MCF 10A (cell line): ENCODE measurements at regions of chr10 and their contacts with region 1.

Region 1: DNA sequence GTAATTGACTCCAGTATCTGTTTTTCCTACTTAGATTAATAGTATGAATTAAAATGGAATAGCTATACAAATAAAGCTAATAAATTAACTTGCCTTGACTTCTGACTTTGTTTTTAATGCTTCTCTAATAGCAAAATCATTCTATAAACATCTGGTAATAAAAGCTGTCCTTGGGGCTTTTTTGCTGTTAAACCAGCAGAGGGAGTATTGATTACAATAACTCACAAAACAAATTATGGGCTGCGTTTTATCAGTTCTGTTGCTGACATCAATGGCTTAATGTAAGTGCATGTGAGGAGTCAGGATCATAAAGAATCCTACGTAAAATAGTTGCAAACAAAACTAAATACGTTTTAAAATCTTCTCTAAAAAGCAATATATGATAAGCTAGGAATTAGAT is 667.8 kb downstream of the PCDH15 start:
- DNase-seq: no peak
- H3K4me3 Mint-ChIP-seq: no peak overlapping the region
- H3K27ac Mint-ChIP-seq: no peak overlapping the region
- H3K4me1 Mint-ChIP-seq: no peaks in the 10 kb centered on the region
- H3K27me3 Mint-ChIP-seq: no peaks in the 10 kb centered on the region
- CTCF ChIP-seq: peak; percentile 35

Region 2: GRCh38 chr10:54402576-54402975 is 269.4 kb after region 1 on chr10:
- CTCF ChIA-PET with region 1: interaction called, 8 read pairs
- POLR2A ChIA-PET with region 1: no interaction called
- intact Hi-C with region 1: loop called (anchors 1 kb)
- DNase-seq: peak; percentile 59
- H3K4me3 Mint-ChIP-seq: no peak overlapping the region
- H3K27ac Mint-ChIP-seq: no peak overlapping the region
- H3K4me1 Mint-ChIP-seq: no peaks in the 10 kb centered on the region
- H3K27me3 Mint-ChIP-seq: no peaks in the 10 kb centered on the region
- CTCF ChIP-seq: peak; percentile 62

Region 3: DNA sequence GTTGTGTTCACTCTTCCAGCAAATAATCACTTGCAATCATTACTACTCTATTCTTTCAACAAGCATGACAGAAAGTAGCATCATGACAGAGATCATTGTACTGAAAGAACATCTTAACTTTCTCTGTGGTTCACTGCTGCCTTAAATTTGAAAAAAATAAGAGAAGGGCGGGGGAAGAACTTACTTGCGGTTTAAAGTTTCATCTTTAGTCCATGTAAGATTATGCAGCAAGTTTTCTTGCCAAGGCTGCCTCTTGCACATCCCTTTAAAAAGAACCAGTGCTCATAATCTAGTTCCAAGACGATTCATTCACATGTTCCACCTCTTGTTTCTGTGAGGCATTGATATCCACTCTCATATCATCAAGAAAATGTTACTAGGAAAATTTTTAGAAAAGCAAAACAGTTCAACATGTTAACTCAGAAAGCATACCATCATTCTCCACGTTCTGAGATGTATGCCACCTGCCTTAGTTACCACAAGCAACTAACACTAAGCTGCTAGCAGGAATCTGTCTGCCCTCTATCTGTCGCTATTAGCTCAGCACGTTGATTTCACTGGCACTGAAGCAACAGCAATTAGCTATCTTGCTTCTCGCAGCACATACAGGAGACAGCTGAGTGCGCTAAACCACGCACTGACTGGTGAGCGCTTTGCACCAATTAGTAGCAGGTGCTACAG is 667.7 kb after region 1 on chr10 and contains the start of gene PCDH15:
- CTCF ChIA-PET with region 1: no interaction called
- POLR2A ChIA-PET with region 1: no interaction called
- intact Hi-C with region 1: loop called (anchors 5 kb)
- DNase-seq: peak; percentile 46
- H3K4me3 Mint-ChIP-seq: no peak within 1 kb of the TSS
- H3K27ac Mint-ChIP-seq: no peak within 1 kb of the TSS
- H3K4me1 Mint-ChIP-seq: peaks cover 5% of the 10 kb centered on the region
- H3K27me3 Mint-ChIP-seq: peaks cover 49% of the 10 kb centered on the region
- CTCF ChIP-seq: peak; percentile 37
- total RNA-seq, gene PCDH15: not detected in 2 replicates